ENCODE measurements at regions of chr9 and their contacts with region 1.

Region 1: DNA sequence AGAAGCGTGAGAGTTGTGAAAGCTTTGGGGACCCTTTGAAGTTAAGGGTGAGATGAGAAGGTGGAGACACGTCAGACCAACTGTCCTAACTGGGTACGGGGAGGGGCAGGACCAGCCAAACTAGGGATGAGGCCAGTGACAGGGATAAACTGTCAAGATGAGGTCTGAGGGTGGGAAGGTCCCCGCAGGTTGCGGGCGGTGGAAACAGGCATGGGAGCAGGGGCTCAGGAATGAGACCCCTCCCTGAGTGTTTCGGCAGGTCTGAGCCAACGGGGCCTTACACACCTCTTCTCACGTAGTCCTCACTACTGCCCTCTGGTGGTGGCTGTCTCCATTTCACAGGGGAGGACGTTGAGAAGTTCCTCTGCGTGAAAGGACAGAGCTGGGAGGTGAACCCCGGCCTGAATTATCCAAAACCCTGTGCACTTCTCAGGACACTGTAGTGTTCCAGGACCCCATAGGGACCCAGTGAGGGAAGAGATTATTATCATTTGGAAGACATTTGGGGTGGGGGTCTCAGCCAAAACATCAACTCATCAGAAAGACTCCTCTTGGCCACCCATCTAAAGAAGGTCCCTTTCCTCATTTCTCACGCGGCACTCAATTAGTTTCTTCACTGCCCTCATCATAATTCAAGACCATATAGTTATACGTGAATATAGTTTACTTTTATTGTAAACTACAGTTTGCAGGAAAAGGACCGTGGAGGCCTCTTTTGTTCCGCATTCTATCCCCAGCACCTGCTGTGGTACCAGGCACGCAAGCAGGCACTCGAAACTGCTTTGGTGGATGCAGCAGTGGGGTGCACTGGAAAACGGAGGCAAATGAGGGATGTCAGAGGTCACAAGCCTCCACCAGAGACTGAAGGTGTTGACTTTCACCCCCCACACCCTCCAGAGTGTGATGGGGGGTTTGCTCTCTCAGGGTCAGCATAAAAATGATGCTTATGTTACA is 21.7 kb upstream of the NANS start:
- DNase-seq: peak; percentile 61
- ATAC-seq: peak; percentile 84
- H3K4me3 ChIP-seq: peak overlapping the region; percentile 25; the same call in 1 of the 2 replicates
- H3K27ac ChIP-seq: peak overlapping the region; percentile 89
- H3K4me1 ChIP-seq: peaks cover 46% of the 10 kb centered on the region
- H3K27me3 ChIP-seq: no peaks in the 10 kb centered on the region
- CTCF ChIP-seq: peak; percentile 72 to 88 (median 81)
- EP300 ChIP-seq: no peak
- POLR2A ChIP-seq: no peak
- RAD21 ChIP-seq: peak; percentile 53

Region 2: DNA sequence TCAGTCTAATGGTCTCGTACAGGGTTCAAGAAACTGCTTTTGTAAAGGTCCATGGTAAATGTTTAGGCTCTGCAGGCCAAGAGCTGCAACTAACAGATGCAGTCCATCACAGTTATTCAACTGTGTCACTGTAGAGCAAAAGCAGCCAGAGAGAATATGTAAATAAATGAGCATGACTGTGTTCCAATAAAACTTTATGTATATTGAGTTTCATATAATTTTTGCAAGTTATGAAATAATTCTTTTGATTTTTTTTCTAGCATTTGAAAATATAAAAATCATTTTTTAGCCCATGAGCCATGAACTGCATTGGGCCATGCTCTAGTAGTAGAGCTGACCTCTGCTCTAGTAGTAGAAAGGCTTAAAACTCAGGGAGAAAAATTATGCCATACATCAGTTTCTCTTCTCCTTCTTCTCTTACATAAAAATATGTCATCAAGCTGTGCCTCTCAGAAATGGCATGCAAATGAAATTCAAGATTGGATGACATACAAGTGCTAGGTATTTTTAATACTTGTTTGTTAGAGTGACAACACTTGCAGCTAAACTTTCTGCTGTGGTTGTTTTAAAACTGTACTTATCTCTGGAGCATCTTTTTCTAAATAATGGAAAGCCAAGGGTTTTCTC is 575.7 kb before region 1 on chr9:
- CTCF ChIA-PET with region 1: no interaction called
- POLR2A ChIA-PET with region 1: no interaction called
- RAD21 ChIA-PET with region 1: no interaction called
- SMC1A ChIA-PET with region 1: no interaction called
- in situ Hi-C with region 1: no loop called
- intact Hi-C with region 1: no loop called
- DNase-seq: no peak
- ATAC-seq: no peak
- H3K4me3 ChIP-seq: no peak overlapping the region
- H3K27ac ChIP-seq: no peak overlapping the region
- H3K4me1 ChIP-seq: no peaks in the 10 kb centered on the region
- H3K27me3 ChIP-seq: no peaks in the 10 kb centered on the region
- CTCF ChIP-seq: no peak
- EP300 ChIP-seq: no peak
- POLR2A ChIP-seq: no peak
- RAD21 ChIP-seq: no peak

Region 3: DNA sequence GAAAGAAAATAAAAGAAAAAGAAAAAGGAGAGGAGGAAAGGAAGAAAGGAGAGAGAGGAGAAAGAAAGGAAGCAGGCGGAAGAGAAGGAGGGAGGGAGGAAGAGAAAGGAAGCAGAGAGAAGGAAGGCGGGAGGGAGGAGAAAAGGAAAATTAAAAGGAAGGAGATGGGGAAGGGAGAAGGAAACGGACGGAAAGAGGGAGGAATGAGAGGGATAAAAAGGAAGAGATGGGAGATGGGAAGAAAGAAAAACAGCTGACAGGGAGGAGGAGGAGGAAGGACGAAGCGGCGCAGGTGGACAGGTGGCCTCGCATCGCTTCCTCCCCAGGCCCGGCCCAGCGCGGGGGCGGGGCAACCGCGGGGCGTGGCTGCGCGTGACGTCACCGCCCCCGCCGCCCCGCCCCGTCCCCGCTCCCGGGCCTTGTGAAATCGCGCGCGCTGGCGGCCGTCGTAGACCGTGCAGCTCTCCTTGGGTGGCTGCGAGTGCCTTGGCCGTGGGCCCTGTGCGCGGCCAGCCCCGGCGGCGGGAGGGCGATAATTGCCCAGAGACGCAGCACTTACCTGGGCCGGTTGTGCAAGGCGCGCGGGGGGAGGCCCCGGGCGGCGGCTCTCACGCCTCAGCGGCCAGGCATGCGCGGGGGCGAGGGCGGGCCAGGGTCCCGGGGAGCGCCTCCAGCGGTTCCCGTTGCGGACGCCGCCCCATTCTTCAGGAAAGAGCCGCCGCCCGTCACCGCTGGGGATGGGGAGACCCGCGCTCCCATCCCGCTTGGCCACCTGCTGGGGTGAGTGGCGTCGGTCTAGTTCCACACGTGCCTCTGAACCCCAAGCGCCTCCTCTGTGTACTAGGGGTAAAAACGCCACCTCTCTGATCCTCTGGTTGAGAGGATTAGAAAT is 231.5 kb before region 1 on chr9:
- CTCF ChIA-PET with region 1: no interaction called
- POLR2A ChIA-PET with region 1: no interaction called
- RAD21 ChIA-PET with region 1: no interaction called
- SMC1A ChIA-PET with region 1: no interaction called
- in situ Hi-C with region 1: no loop called
- intact Hi-C with region 1: no loop called
- DNase-seq: no peak
- ATAC-seq: peak; percentile 96
- H3K4me3 ChIP-seq: peak overlapping the region; percentile 53
- H3K27ac ChIP-seq: no peak overlapping the region
- H3K4me1 ChIP-seq: no peaks in the 10 kb centered on the region; the same call in 1 of the 2 replicates
- H3K27me3 ChIP-seq: peaks cover 0 to 2% of the 10 kb centered on the region in 2 experiments; a peak in 1 of 4 replicates
- CTCF ChIP-seq: 0 out of 6 replicates have a peak, but pooled peaks of 1 of the 3 experiments have one; percentile 6
- EP300 ChIP-seq: no peak
- POLR2A ChIP-seq: no peak; the same call in 1 of the 2 replicates
- RAD21 ChIP-seq: no peak

Region 4: GRCh38 chr9:97982683-97983588 is 51.9 kb before region 1 on chr9 and contains the start of gene ANP32B:
- CTCF ChIA-PET with region 1: interaction called, 8 read pairs
- POLR2A ChIA-PET with region 1: interaction called, 3 read pairs
- RAD21 ChIA-PET with region 1: interaction called, 11 read pairs
- SMC1A ChIA-PET with region 1: interaction called, 7 read pairs
- in situ Hi-C with region 1: no loop called
- intact Hi-C with region 1: loop called (anchors 2 kb)
- DNase-seq: peak; percentile 44
- ATAC-seq: peak; percentile 88
- H3K4me3 ChIP-seq: peak within 1 kb of the TSS; percentile 90
- H3K27ac ChIP-seq: peak within 1 kb of the TSS; percentile 99
- H3K4me1 ChIP-seq: peaks cover 18% of the 10 kb centered on the region
- H3K27me3 ChIP-seq: no peaks in the 10 kb centered on the region
- CTCF ChIP-seq: peak; percentile 76 to 84 (median 83); a peak in 5 of 6 replicates
- EP300 ChIP-seq: no peak
- POLR2A ChIP-seq: peak; percentile 78
- RAD21 ChIP-seq: peak; percentile 39; the same call in 1 of the 2 replicates
- polyA plus RNA-seq, gene ANP32B: 85.9 to 204 TPM

Region 5: GRCh38 chr9:98024702-98025101 is 10.2 kb before region 1 on chr9:
- CTCF ChIA-PET with region 1: interaction called, 16 read pairs
- POLR2A ChIA-PET with region 1: interaction called, 4 read pairs
- RAD21 ChIA-PET with region 1: no interaction called
- SMC1A ChIA-PET with region 1: interaction called, 8 read pairs
- in situ Hi-C with region 1: no loop called
- intact Hi-C with region 1: no loop called
- DNase-seq: no peak
- ATAC-seq: no peak
- H3K4me3 ChIP-seq: no peak overlapping the region
- H3K27ac ChIP-seq: no peak overlapping the region
- H3K4me1 ChIP-seq: no peaks in the 10 kb centered on the region
- H3K27me3 ChIP-seq: no peaks in the 10 kb centered on the region
- CTCF ChIP-seq: no peak
- EP300 ChIP-seq: no peak
- POLR2A ChIP-seq: no peak
- RAD21 ChIP-seq: no peak

Region 6: GRCh38 chr9:98045234-98046179 is 10.6 kb after region 1 on chr9:
- CTCF ChIA-PET with region 1: interaction called, 15 read pairs
- POLR2A ChIA-PET with region 1: interaction called, 4 read pairs
- RAD21 ChIA-PET with region 1: interaction called, 3 read pairs
- SMC1A ChIA-PET with region 1: interaction called, 5 read pairs
- in situ Hi-C with region 1: no loop called
- intact Hi-C with region 1: no loop called
- DNase-seq: peak; percentile 84
- ATAC-seq: peak; percentile 93
- H3K4me3 ChIP-seq: peak overlapping the region; percentile 58
- H3K27ac ChIP-seq: peak overlapping the region; percentile 88
- H3K4me1 ChIP-seq: peaks cover 11% of the 10 kb centered on the region; the same call in 1 of the 2 replicates
- H3K27me3 ChIP-seq: no peaks in the 10 kb centered on the region
- CTCF ChIP-seq: peak in 2 of 3 experiments; percentile 9 to 30; a peak in 1 of 6 replicates
- EP300 ChIP-seq: no peak; a peak in 1 of 4 replicates
- POLR2A ChIP-seq: peak; percentile 54; the same call in 1 of the 2 replicates
- RAD21 ChIP-seq: no peak

Region 7: DNA sequence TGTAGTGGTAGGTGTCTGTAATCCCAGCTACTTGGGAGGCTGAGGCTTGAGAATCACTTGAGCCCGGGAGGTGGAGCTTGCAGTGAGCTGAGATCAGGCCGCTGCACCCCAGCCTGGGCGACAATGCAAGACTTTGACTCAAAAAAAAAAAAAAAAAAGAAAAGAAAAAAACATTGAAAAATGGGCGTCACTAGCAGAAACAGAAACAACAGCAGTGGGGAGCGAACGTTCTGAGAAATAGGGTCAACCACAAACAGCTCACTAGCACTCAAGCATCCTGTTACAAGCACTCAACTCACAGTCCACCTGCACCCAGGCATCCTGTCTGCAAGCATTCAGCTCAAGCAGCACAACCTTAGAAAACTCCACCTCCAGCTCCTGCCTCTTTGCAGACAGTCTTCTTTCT is 67.0 kb after region 1 on chr9:
- CTCF ChIA-PET with region 1: interaction called, 4 read pairs
- POLR2A ChIA-PET with region 1: no interaction called
- RAD21 ChIA-PET with region 1: interaction called, 4 read pairs
- SMC1A ChIA-PET with region 1: interaction called, 3 read pairs
- in situ Hi-C with region 1: no loop called
- intact Hi-C with region 1: loop called (anchors 5 kb)
- DNase-seq: peak; percentile 99
- ATAC-seq: peak; percentile 90
- H3K4me3 ChIP-seq: peak overlapping the region; percentile 31; the same call in 1 of the 2 replicates
- H3K27ac ChIP-seq: peak overlapping the region; percentile 75
- H3K4me1 ChIP-seq: peaks cover 87% of the 10 kb centered on the region
- H3K27me3 ChIP-seq: no peaks in the 10 kb centered on the region
- CTCF ChIP-seq: no peak
- EP300 ChIP-seq: peak; percentile 80 to 82
- POLR2A ChIP-seq: peak; percentile 65
- RAD21 ChIP-seq: no peak

Measured in GM12878 (cell line).